ENCODE measurements at regions of chr3 and their contacts with region 1.

Region 1: GRCh38 chr3:49673715-49674496 is at the start of gene APEH:
- H3K4me3 Mint-ChIP-seq: peak within 1 kb of the TSS; percentile 95
- H3K27ac Mint-ChIP-seq: peak within 1 kb of the TSS; percentile 100
- H3K4me1 Mint-ChIP-seq: peaks cover 37% of the 10 kb centered on the region
- H3K27me3 Mint-ChIP-seq: peaks cover 13% of the 10 kb centered on the region

Region 2: GRCh38 chr3:49469936-49470713 is 203.8 kb before region 1 on chr3 and contains the start of gene DAG1:
- intact Hi-C with region 1: loop called (anchors 5 kb)
- H3K4me3 Mint-ChIP-seq: peak within 1 kb of the TSS; percentile 78
- H3K27ac Mint-ChIP-seq: peak within 1 kb of the TSS; percentile 97
- H3K4me1 Mint-ChIP-seq: peaks cover 36% of the 10 kb centered on the region
- H3K27me3 Mint-ChIP-seq: peaks cover 24% of the 10 kb centered on the region

Region 3: DNA sequence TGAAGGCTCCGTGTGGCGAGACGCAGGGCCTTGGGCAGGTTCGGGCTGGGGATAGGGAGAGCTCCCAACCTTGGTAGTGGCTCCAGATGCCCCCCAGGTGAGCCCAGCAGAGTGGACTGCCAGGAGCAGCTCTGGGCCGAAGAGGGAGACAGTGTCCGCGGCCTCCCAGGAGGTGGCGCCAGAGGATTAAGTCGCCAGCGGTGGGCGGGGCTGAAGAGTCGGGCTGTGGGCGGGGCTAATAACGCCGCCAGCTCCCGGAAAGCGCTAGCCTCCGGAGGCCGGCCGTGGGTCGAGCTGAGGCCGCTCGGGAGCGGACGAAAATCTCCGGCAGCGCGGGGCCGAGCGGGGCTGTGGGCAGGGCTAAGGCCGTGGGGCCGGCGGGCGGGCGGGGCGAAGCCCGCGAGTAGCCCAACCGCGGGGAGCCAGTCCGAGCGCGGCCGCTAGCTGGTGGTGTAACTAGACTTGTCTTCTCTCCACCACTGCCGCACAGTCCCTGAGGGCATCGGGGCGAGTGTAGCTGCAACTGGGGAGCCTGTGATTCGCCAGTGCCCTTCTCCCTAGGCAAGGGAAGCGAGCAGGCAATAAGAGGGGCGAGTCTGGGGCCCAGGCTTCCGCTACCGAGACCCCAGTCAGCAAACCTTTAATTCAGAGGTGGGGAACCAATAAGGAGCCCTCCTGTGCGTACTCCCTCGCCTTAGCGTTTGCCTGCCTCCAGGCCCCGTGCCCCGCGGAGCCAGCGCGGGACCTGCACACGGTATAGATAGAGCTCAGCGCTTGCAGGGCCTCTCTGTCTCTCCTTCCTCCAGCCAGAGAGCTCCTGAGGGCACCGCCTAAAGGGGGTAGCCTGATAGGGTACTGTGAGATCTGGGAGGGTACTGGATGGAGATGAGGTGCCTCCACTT is 134.0 kb before region 1 on chr3:
- intact Hi-C with region 1: loop called (anchors 1 kb)
- H3K4me3 Mint-ChIP-seq: peak overlapping the region; percentile 70
- H3K27ac Mint-ChIP-seq: peak overlapping the region; percentile 63
- H3K4me1 Mint-ChIP-seq: peaks cover 12% of the 10 kb centered on the region
- H3K27me3 Mint-ChIP-seq: peaks cover 19% of the 10 kb centered on the region

Measured in dendritic cell treated with granulocyte-macrophage colony-stimulating factor and Interleukin-4, amounts not matched to agents 40 ng/mL and 50 ng/mL, for 4 days (primary cell).